ENCODE measurements at regions of chr10 and their contacts with region 1.

Region 1: DNA sequence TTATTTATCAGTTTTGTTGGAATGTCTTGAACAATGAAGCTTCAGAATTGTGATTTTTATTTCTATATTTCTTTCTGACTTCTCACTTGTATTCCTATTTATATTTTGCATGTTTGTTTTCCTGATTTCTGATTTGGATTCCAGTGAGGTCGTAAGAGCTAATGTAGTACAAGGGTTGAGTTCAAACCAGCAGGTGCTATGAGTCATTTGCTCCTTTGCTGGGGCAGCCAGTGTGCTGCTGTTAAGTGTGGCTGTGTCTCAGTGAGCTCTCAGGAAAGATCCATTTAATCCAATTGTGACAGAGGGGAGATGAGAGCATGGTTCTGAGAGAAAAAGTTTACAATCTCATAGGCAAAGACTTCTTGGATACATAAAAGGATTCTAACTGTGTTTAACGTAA is 48.6 kb downstream of the MCU start:
- DNase-seq: peak; percentile 51 to 60
- H3K4me3 ChIP-seq: no peak overlapping the region
- H3K4me3 Mint-ChIP-seq: no peak overlapping the region
- H3K27ac Mint-ChIP-seq: no peak overlapping the region
- H3K4me1 ChIP-seq: peaks cover 30% of the 10 kb centered on the region
- H3K4me1 Mint-ChIP-seq: peaks cover 24% of the 10 kb centered on the region
- H3K27me3 ChIP-seq: no peaks in the 10 kb centered on the region
- H3K27me3 Mint-ChIP-seq: no peaks in the 10 kb centered on the region
- CTCF ChIP-seq: no peak

Region 2: GRCh38 chr10:72802763-72803505 is 62.4 kb after region 1 on chr10:
- CTCF ChIA-PET with region 1: no interaction called
- POLR2A ChIA-PET with region 1: no interaction called
- intact Hi-C with region 1: loop called (anchors 5 kb)
- DNase-seq: no peak
- H3K4me3 ChIP-seq: no peak overlapping the region
- H3K4me3 Mint-ChIP-seq: no peak overlapping the region
- H3K27ac Mint-ChIP-seq: no peak overlapping the region
- H3K4me1 ChIP-seq: peaks cover 10% of the 10 kb centered on the region; the same call in 1 of the 2 replicates
- H3K4me1 Mint-ChIP-seq: no peaks in the 10 kb centered on the region
- H3K27me3 ChIP-seq: no peaks in the 10 kb centered on the region
- H3K27me3 Mint-ChIP-seq: no peaks in the 10 kb centered on the region
- CTCF ChIP-seq: no peak